ENCODE measurements at regions of chr10 and their contacts with region 1.

Region 1: DNA sequence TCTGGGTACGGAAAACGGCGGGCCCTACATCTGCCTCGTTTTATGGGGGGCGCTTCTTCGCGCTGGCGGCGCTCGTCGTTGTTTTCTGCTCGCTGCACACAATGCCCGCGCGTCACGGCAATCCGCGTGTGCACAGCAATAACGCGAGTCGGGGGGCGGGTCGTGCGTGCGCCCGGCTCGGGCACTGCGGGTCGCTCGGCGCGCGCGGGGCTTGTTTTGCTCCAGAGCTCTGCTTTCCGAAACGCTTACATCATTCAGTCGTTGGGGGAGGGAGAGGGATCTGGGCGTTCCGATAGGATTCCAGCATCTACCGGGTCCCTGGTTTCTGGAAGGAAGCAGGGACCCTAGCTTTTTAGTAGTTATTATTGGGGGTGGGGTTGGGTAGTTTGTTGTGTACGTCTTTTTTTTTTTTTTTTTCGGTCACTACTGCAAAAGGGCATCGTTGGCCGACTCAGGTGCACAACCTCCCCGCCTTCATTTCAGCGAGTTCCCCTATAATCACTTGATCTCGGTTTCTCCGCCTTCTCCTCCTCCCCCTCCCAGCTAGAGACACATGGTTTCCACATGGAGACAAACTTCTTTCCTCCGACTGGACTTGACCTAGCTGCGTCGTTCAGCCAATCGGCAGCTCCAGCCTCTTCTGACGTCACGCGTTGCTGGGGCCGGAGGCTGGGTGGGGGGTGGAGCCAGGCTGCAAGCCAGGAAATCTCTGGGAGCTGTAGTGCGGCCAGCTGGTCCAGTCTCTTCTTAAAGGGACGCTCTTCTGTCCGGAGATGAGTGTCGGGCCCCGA is 3.5 kb downstream of the MXI1 start:
- DNase-seq: peak; percentile 99
- ATAC-seq: peak; percentile 73
- H3K4me3 ChIP-seq: peak overlapping the region; percentile 67 to 76
- H3K27ac ChIP-seq: peak overlapping the region; percentile 46; the same call in 1 of the 2 replicates
- H3K4me1 ChIP-seq: peaks cover 14 to 51% of the 10 kb centered on the region in 2 experiments
- H3K27me3 ChIP-seq: no peaks in the 10 kb centered on the region
- CTCF ChIP-seq: no peak
- POLR2A ChIP-seq: peak; percentile 33
- RAD21 ChIP-seq: no peak

Region 2: GRCh38 chr10:110007701-110008517 is 203.0 kb before region 1 on chr10 and contains the start of gene ADD3:
- CTCF ChIA-PET with region 1: no interaction called
- POLR2A ChIA-PET with region 1: no interaction called
- RAD21 ChIA-PET with region 1: no interaction called
- intact Hi-C with region 1: loop called (anchors 5 kb)
- DNase-seq: peak; percentile 78
- ATAC-seq: peak; percentile 78
- H3K4me3 ChIP-seq: peak within 1 kb of the TSS; percentile 68 to 81
- H3K27ac ChIP-seq: peak within 1 kb of the TSS; percentile 63
- H3K4me1 ChIP-seq: peaks cover 21 to 49% of the 10 kb centered on the region in 2 experiments
- H3K27me3 ChIP-seq: no peaks in the 10 kb centered on the region
- CTCF ChIP-seq: no peak
- POLR2A ChIP-seq: peak; percentile 69
- RAD21 ChIP-seq: no peak
- total RNA-seq, gene ADD3: 41.1 TPM

Region 3: GRCh38 chr10:110192552-110192951 is 18.3 kb before region 1 on chr10:
- CTCF ChIA-PET with region 1: interaction called, 12 read pairs
- POLR2A ChIA-PET with region 1: interaction called, 5 read pairs
- RAD21 ChIA-PET with region 1: no interaction called
- intact Hi-C with region 1: no loop called
- DNase-seq: no peak
- ATAC-seq: peak; percentile 88
- H3K4me3 ChIP-seq: no peak overlapping the region
- H3K27ac ChIP-seq: no peak overlapping the region
- H3K4me1 ChIP-seq: no peaks in the 10 kb centered on the region
- H3K27me3 ChIP-seq: 0 out of 2 replicates have a peak, but pooled peaks cover 8% of the 10 kb centered on the region
- CTCF ChIP-seq: peak in 2 of 3 experiments; percentile 51 to 57; a peak in 4 of 6 replicates
- POLR2A ChIP-seq: no peak
- RAD21 ChIP-seq: no peak

Region 4: GRCh38 chr10:110225756-110226542 is 15.1 kb after region 1 on chr10:
- CTCF ChIA-PET with region 1: interaction called, 55 read pairs
- POLR2A ChIA-PET with region 1: interaction called, 12 read pairs
- RAD21 ChIA-PET with region 1: interaction called, 4 to 6 read pairs
- intact Hi-C with region 1: loop called (anchors 1 kb)
- DNase-seq: peak; percentile 92
- ATAC-seq: peak; percentile 83
- H3K4me3 ChIP-seq: peak overlapping the region; percentile 56 to 63
- H3K27ac ChIP-seq: peak overlapping the region; percentile 93
- H3K4me1 ChIP-seq: peaks cover 24 to 34% of the 10 kb centered on the region in 2 experiments
- H3K27me3 ChIP-seq: no peaks in the 10 kb centered on the region
- CTCF ChIP-seq: peak in 2 of 3 experiments; percentile 64 to 82; a peak in 4 of 6 replicates
- POLR2A ChIP-seq: no peak
- RAD21 ChIP-seq: no peak

Region 5: DNA sequence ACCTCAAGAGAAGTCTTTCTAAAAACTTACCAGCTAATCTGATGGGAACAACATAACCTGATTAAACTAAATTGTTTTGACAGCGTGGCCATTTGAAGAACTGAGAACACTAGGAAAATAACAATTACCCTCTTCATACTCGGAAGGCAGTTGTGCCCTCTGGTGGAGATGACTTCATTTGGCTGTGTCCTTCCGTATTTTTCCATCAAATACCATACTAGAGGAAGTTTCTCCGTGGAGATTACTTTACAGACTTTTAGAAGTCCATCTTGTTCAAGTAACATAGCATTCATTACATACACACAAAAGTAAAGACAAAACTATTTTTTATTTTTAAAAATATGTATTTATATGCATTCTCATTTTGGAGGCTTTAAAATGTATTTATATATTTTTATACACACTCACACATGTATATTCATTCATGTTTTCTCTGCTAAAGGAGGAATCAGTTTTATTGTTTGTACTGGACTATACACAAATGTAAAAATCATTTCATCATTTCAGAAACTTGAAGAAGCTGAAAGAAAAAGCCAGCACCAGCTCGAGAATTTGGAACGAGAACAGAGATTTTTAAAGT is 68.6 kb after region 1 on chr10:
- CTCF ChIA-PET with region 1: interaction called, 17 read pairs
- POLR2A ChIA-PET with region 1: no interaction called
- RAD21 ChIA-PET with region 1: interaction called in 1 of 2 experiments, 3 read pairs
- intact Hi-C with region 1: loop called (anchors 1 kb)
- DNase-seq: peak; percentile 54
- ATAC-seq: peak; percentile 86
- H3K4me3 ChIP-seq: no peak overlapping the region
- H3K27ac ChIP-seq: no peak overlapping the region
- H3K4me1 ChIP-seq: peaks cover 0 to 3% of the 10 kb centered on the region in 2 experiments; a peak in 1 of 4 replicates
- H3K27me3 ChIP-seq: no peaks in the 10 kb centered on the region
- CTCF ChIP-seq: peak; percentile 79 to 94 (median 91)
- POLR2A ChIP-seq: no peak
- RAD21 ChIP-seq: peak; percentile 95

Measured in HCT116 (cell line).